A673 (cell line): ENCODE measurements at regions of chr1 and their contacts with region 1.

Region 1: GRCh38 chr1:198771563-198772153 is 132.8 kb downstream of the PTPRC start:
- DNase-seq: peak; percentile 91
- H3K4me3 ChIP-seq: no peak overlapping the region
- H3K27ac ChIP-seq: peak overlapping the region; percentile 78
- H3K4me1 ChIP-seq: peaks cover 39% of the 10 kb centered on the region
- H3K27me3 ChIP-seq: no peaks in the 10 kb centered on the region
- CTCF ChIP-seq: peak; percentile 78

Region 2: GRCh38 chr1:198892065-198892464 is 120.4 kb after region 1 on chr1:
- CTCF ChIA-PET with region 1: no interaction called
- POLR2A ChIA-PET with region 1: no interaction called
- intact Hi-C with region 1: loop called (anchors 10 kb)
- DNase-seq: peak; percentile 97
- H3K4me3 ChIP-seq: peak overlapping the region; percentile 4
- H3K27ac ChIP-seq: peak overlapping the region; percentile 94
- H3K4me1 ChIP-seq: peaks cover 97% of the 10 kb centered on the region
- H3K27me3 ChIP-seq: no peaks in the 10 kb centered on the region
- CTCF ChIP-seq: no peak

Region 3: DNA sequence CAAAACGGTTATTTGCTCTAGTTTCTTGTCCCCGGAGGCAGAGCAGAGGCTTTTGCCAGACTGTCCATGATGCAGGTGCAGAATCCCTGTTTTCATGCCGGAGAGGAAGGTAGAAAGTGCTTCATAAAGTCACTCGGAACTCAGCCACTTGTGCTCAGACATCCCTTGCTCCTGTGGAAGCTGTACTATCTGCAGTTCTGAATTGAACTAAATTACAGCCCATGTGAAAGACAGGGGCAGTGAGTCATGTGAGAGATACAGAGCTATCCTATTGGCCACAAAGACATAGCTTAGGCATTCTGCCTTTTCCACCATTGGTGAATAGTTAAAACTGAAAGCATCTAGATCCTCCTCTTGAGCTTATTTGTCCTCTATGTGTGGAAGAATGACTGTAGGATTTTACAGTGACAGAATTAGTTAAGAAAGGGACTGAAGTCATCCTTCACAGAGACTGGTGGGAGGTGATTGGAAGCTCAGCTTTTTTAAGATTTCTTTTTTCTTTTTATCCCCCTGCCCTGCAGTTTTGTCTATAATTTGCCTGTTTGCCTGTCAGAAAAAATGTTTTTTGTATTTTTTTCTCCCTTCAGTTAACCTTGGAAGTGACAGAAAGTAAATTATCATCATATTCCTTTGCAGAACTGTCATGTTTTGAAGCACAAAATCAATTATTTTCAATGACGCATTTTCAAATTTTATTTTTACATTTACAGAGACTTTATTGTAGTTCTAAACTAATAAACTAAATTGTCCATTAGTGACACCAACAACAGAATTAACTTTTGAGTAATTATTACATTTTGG is 165.8 kb after region 1 on chr1:
- CTCF ChIA-PET with region 1: no interaction called
- POLR2A ChIA-PET with region 1: interaction called, 4 read pairs
- intact Hi-C with region 1: loop called (anchors 2 kb)
- DNase-seq: peak; percentile 98
- H3K4me3 ChIP-seq: peak overlapping the region; percentile 68
- H3K27ac ChIP-seq: peak overlapping the region; percentile 94
- H3K4me1 ChIP-seq: peaks cover 10% of the 10 kb centered on the region
- H3K27me3 ChIP-seq: no peaks in the 10 kb centered on the region
- CTCF ChIP-seq: no peak

Region 4: DNA sequence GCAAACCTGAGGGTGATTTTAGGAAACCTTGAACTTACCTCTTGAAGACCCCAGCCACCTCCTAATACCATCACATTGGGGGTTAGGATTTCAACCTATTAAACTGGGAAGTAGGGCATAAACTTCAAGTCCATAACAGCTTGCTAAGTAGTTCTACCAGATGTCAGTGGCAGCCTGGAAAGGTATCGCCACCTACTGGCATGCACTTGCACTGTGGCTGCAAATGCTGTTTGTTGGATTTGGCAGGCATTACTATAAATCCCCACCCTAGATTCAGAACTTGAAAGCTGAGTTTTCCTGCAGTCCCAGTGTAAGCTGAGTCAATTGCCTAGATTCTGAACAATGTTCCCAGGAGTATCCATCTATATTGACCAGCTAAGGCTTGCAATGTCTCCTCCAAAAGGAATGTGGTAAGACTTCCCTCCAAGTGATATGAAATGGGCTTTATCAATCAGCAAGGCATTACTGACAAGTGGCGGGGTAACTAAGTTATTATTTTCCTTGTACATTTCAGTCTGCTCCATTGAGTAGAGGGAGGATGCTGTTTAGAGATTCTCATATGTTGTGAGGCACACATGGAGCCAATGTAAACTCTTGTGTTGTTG is 341.7 kb after region 1 on chr1:
- CTCF ChIA-PET with region 1: interaction called, 5 read pairs
- POLR2A ChIA-PET with region 1: no interaction called
- intact Hi-C with region 1: loop called (anchors 1 kb)
- DNase-seq: peak; percentile 85
- H3K4me3 ChIP-seq: no peak overlapping the region
- H3K27ac ChIP-seq: peak overlapping the region; percentile 34
- H3K4me1 ChIP-seq: no peaks in the 10 kb centered on the region
- H3K27me3 ChIP-seq: no peaks in the 10 kb centered on the region
- CTCF ChIP-seq: peak; percentile 91

Region 5: DNA sequence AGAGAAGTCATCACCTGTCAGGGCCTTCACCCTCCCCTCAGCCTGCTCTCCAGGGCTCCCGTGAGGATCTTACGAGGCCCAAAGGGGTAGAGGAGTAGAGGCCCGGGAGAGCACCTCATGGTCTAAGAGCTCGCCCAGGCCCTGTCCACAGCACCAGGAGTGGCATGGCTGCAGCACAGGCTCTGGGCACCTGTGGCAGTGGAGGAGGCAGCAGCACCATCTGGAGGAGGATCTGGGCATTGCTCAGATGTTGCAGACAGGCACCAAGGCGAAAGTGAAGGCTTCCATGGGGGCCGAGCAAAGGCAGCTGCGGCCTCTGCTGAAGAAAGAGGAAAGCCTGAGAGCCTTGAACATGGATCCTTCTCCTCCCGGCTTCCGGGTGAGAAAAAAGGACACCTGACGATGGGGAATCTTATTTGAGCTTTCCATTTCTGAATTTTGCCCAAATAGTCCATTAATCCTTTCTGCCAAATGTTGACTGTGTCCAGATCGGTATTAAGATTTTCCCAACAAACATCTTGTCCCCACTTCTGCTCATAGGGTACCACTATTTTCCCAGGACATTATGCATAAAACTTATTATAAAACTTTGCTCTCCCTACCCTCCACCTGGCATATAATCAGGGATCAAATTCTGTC is 471.9 kb after region 1 on chr1:
- CTCF ChIA-PET with region 1: interaction called, 3 read pairs
- POLR2A ChIA-PET with region 1: no interaction called
- intact Hi-C with region 1: loop called (anchors 10 kb)
- DNase-seq: peak; percentile 74
- H3K4me3 ChIP-seq: no peak overlapping the region
- H3K27ac ChIP-seq: peak overlapping the region; percentile 47
- H3K4me1 ChIP-seq: peaks cover 3% of the 10 kb centered on the region
- H3K27me3 ChIP-seq: no peaks in the 10 kb centered on the region
- CTCF ChIP-seq: peak; percentile 73

Region 6: DNA sequence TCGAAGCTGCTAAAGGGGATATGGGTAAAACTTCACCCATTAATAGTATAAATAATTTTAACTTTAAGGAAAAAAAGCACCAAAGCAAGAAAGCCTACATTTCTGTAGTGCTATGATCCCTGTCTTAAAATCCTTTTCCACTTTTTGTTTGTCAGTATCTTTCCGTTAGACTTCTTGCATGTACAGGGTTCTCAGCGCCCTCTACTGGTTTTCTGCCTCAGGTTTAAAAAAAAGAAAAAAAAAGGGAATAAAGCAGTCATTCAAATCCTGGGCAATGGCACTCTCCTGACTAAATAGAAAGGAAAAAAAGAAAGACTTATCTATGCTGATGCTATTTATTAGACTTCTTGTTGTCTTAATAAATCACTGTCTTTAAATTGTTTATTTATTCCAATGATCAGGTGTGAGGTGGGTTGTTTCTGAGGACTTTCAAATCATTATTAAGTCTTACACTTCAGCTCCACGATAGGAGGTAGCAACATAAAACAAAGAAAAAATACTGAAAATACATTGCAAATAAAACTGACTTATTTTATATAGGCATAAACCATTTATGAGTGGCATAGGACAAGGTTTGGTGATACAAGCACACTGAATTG is 780.4 kb after region 1 on chr1:
- CTCF ChIA-PET with region 1: interaction called, 3 read pairs
- POLR2A ChIA-PET with region 1: no interaction called
- intact Hi-C with region 1: loop called (anchors 5 kb)
- DNase-seq: peak; percentile 90
- H3K4me3 ChIP-seq: no peak overlapping the region
- H3K27ac ChIP-seq: peak overlapping the region; percentile 81
- H3K4me1 ChIP-seq: peaks cover 33% of the 10 kb centered on the region
- H3K27me3 ChIP-seq: no peaks in the 10 kb centered on the region
- CTCF ChIP-seq: peak; percentile 92